Gastrocnemius medialis (tissue), 4 donors: ENCODE measurements at regions of chr1 and their contacts with region 1.

Region 1: DNA sequence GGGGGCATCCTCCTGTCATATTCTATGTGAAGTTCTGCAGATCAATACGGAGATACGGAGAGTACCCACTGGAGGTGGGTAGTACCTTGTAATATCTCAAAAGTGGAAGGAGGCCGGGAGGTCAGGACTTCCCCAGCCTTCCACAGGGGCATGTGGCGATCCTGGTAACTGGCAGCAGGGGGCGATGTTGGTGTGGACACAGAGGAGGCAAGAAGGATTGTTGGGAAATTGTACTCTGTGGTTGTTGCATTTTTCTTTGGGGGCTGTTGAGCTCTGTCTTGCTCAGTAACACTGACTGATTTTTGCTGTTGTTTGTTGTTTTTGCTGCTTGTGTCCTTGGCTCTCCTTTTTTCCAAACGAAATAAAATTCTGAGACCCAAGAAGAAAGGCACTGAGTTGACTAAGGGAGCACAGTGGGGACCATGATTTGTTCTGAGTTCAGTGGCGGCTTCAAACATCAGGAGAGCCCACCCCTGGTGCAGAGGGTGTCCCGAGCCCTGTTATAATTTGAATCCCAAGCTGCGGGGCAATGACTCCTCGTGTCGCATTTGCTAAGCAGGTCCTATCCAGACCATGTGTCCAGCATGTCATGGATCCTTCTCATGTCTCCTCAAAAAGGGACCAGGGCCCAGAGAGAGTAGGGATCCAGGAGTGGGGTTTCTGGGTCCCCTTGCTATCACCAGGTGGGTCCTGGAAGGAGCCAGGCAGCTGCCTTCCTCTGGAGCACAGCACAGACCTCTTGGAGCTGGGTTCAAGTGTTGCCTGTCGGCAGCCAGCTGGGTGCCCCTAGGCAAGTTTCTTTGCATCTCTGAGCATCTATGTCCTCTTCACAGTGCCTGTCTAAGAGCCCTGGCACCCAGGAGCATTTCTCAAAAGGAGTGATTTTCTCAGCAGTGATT is 22.8 kb downstream of the LHX4 start:
- DNase-seq: peak; percentile 34 to 59
- ATAC-seq: peak; percentile 51 to 77
- H3K4me3 ChIP-seq: no peak overlapping the region
- H3K27ac ChIP-seq: no peak overlapping the region
- H3K4me1 ChIP-seq: no peaks in the 10 kb centered on the region
- H3K27me3 ChIP-seq: peaks cover 10 to 23% (median 23%) of the 10 kb centered on the region in 3 donors
- CTCF ChIP-seq: peak; percentile 50 to 79 (median 73)
- POLR2A ChIP-seq: no peak

Region 2: DNA sequence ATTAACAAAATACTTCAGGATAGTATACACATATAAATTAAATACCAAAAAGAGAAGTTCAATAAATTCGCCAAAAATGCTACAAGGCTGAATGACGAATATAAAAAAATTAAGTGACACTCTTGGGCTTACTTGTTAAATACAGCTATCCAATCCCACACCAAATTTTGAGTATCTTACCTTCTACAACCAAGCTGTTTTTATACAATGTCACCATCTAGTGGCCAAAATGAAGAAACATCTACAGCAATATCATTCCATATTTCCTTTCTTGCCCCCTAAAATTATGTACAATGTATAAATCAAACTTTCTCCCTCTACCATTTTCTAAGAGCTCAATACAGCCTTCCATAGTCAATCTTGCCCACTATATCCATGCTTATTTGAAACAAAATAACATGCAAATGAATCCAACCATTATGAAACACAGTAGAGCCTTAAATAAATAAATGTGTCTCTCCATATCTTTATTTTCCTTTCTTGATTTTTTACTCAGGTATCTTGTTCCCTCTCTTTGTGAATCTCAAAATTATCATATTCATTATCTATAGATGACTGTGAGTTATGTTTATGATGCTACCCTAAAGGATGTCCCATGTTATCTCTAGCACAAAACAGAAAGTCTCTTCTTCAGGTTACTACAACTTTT is 163.2 kb after region 1 on chr1:
- in situ Hi-C with region 1: no loop called
- intact Hi-C with region 1: loop called (anchors 2 kb)
- DNase-seq: no peak
- ATAC-seq: no peak
- H3K4me3 ChIP-seq: no peak overlapping the region
- H3K27ac ChIP-seq: no peak overlapping the region
- H3K4me1 ChIP-seq: no peaks in the 10 kb centered on the region
- H3K27me3 ChIP-seq: no peaks in the 10 kb centered on the region
- CTCF ChIP-seq: peak in 4 of 5 experiments; percentile 31 to 47 (median 38)
- POLR2A ChIP-seq: no peak

Region 3: DNA sequence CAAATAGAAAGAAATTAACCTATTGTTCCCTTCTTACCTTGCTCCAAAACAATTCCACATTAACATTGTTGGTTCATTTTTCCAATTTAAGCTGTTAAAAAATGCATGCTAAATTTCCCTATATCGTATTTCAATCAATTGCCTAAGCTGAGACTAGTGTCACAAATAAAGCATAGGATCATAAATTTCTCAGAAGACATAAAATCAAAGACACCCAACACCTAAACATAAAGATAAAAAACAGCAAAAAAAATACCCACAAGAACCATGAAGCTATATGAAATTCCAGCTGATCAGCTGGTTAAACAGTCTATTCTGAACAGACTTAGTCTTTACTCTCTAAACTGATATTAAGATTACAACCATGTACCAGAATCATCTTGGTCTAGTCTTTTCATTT is 217.1 kb after region 1 on chr1:
- in situ Hi-C with region 1: loop called in 3 of 4 experiments (anchors 5 to 10 kb)
- intact Hi-C with region 1: no loop called
- DNase-seq: no peak
- ATAC-seq: no peak
- H3K4me3 ChIP-seq: no peak overlapping the region
- H3K27ac ChIP-seq: no peak overlapping the region
- H3K4me1 ChIP-seq: no peaks in the 10 kb centered on the region
- H3K27me3 ChIP-seq: no peaks in the 10 kb centered on the region
- CTCF ChIP-seq: no peak
- POLR2A ChIP-seq: no peak

Region 4: DNA sequence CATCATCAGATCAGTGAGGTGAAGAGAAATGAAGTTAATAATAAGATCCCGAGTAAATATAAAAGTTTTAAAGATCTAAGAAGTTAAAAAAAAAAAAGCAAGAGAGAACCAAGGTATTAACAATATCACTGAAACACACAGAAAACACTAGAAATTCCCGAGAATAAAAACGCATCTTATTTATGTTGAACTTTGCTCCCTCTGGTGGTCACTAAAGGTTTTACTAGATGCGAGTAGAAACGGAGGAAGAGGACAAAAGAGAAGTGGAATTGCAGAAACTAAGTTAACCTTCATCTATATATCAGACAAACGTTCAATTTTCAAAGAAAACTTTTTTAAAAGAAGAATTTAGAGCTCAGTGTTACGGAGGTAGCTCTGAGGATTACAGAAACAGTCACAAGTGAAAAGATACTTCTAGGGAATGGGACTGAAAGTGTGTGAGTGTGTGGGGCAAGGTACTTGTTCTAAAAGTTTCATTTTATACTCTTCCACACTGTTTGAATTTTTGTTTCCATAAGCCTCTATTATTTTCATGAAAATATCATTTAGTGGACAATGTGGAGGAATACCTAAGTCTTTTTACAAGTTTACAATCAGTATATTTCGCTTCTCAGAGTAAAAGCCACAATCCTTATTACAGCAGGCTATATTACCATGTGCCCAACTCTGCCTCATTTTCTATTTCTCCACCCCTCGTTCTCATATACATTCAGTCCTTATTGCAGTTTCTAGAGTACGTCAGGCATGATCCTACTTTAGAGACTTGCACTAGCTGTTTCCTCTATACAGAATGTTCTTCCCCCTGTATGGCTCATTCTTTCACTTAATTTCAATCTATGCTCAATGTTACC is 229.8 kb after region 1 on chr1:
- in situ Hi-C with region 1: loop called (anchors 5 to 10 kb)
- intact Hi-C with region 1: loop called (anchors 2 kb)
- DNase-seq: no peak
- ATAC-seq: no peak
- H3K4me3 ChIP-seq: no peak overlapping the region
- H3K27ac ChIP-seq: no peak overlapping the region
- H3K4me1 ChIP-seq: peaks cover 0 to 10% of the 10 kb centered on the region in 2 donors
- H3K27me3 ChIP-seq: no peaks in the 10 kb centered on the region
- CTCF ChIP-seq: peak; percentile 31 to 76 (median 50)
- POLR2A ChIP-seq: no peak